ENCODE measurements at regions of chr7 and their contacts with region 1.

Region 1: GRCh38 chr7:38107486-38107893 is 70.6 kb upstream of the STARD3NL start:
- ATAC-seq: peak; percentile 69 to 88 (median 78)
- H3K4me3 ChIP-seq: no peak overlapping the region
- H3K27ac ChIP-seq: no peak overlapping the region
- H3K4me1 ChIP-seq: no peaks in the 10 kb centered on the region

Region 2: DNA sequence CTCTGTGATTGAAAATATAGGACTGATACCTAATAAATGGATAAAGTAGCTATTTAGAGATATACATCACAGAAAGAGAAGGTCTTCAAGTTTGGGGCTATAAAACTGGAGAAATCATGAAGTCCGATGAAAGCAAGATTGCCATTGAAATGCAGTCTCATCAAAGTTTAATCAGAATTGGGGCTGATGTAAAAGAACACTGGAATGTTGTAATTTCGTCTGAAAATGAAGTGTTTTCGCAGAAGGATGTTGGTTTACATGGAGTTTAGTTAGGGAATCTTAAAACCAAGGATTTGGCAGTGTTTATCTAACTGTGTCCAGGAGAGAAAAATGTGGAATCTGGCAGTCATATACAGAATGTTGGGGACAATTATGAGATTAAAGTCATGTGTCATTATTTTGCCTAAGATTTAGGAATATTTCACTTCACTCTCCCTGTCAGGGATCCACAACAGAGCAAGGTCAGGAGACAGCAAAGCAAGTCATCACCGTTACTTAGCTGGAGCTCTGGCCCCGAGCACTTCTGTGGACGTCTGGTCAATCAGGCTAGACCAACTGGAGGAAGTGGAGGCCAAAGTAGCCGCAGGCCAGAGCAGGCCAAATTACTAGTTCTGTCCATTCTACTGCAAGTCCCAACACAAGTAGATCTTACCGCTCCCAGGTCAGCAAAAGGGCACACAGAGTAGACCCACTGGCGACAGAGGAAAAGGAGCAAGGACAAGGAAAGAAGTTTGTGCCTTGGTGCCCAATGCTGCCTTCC is 150.1 kb before region 1 on chr7:
- in situ Hi-C with region 1: no loop called
- ATAC-seq: no peak
- H3K4me3 ChIP-seq: no peak overlapping the region
- H3K27ac ChIP-seq: no peak overlapping the region
- H3K4me1 ChIP-seq: no peaks in the 10 kb centered on the region

Region 3: DNA sequence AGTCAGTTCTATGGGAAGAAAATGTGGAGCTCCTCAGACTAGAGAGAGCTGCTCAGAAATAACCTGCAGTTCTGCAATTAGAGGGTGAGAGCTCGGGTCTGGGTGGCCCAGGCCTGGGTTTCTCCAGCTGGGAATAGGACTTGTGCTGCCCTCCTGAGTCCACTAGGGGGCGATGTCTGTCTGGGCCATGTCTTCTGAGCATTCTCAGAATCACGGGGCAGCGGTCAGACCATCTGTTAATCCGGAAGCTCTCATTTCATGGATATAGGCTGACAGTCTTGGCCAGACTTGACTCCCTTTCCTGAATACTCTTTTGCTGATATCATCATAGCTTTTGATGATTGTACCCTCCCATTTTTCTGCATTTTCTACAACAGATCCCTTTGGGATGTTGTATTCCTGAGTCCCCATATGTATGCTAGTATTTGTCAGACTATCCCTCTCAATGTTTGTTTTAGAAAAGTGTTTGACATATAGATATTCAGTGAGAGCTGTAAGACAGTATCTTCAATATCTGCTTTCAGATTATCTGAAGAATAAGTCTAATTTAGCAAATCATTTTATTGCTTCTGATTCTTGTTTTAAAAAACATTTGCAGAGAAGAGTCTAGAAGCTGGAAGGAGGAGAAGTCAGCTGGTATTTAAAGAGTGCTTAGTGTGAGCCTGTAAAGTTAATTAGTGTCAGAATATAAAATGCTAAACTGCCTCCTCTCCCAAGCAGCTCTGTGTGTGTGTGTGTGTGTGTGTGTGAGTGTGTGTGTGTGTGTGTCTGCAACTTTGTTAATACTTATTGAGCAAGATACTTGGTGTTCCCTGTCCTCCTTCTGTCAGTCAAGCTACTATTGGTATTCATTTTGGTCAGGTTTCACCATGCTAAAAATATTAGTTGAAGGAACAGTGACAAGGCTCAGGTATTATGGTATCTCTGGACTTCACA is 108.5 kb after region 1 on chr7:
- in situ Hi-C with region 1: loop called in 3 of 9 experiments (anchors 10 to 25 kb)
- ATAC-seq: peak; percentile 91 to 98 (median 94)
- H3K4me3 ChIP-seq: no peak overlapping the region
- H3K27ac ChIP-seq: no peak overlapping the region
- H3K4me1 ChIP-seq: peaks cover 0 to 3% of the 10 kb centered on the region in 2 donors

Region 4: DNA sequence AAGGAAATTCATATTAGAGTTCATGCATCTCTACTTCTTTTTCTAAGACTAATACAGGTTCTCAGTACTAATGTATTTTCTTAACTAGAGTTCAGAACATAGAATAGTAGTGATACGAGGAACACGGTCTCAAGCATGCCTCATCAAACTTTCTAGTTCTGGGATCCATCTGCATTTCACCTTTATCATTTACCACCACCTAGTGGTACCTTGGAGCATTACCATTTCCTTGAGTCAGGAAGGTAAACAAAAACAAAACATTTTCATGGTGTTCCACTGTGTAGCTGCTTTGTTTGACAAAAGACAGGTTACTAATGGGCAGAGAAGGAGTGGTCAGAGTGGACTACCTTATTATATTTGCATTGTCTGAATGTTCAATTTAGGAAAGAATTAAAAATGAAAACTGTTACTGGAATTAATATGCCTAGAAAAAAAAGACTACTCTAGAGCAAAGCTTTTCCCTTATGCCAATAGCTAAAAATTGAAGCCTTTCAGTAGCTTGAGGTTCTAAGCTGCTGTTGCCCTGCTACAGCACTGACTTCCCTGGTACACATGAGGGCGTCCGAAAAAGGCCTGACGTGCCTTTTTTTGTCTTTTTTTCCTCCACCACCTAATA is 115.1 kb after region 1 on chr7:
- in situ Hi-C with region 1: loop called in 3 of 9 experiments (anchors 10 to 25 kb)
- ATAC-seq: peak in 3 of 8 experiments; percentile 40 to 52 (median 43)
- H3K4me3 ChIP-seq: no peak overlapping the region
- H3K27ac ChIP-seq: no peak overlapping the region
- H3K4me1 ChIP-seq: peaks cover 0 to under 1% of the 10 kb centered on the region in 2 donors

Region 5: GRCh38 chr7:38335492-38336147 is 228.1 kb after region 1 on chr7:
- in situ Hi-C with region 1: loop called in 2 of 9 experiments (anchors 25 kb)
- ATAC-seq: peak; percentile 93 to 98 (median 96)
- H3K4me3 ChIP-seq: no peak overlapping the region
- H3K27ac ChIP-seq: no peak overlapping the region
- H3K4me1 ChIP-seq: peaks cover 0 to 3% of the 10 kb centered on the region in 2 donors

Region 6: DNA sequence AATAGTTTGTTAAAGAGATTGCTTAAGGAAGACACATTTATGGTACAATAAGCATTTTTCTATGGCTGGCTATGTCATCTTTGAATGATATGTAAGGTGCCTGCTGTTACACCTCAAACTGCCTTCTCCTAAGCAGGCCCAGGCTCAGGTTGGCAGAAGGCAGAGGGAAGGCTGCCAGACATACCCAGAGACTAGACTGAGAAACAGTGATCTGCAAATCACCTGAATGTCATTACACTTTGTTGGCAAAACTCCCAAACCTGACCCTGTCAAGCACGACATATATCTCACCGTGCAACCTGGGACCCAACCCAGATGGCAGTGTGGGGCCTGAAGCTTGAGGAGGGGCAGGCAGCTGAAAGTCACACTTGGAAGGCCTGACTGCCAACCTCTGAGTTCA is 302.6 kb after region 1 on chr7:
- in situ Hi-C with region 1: no loop called
- ATAC-seq: no peak
- H3K4me3 ChIP-seq: no peak overlapping the region
- H3K27ac ChIP-seq: no peak overlapping the region
- H3K4me1 ChIP-seq: no peaks in the 10 kb centered on the region

Region 7: DNA sequence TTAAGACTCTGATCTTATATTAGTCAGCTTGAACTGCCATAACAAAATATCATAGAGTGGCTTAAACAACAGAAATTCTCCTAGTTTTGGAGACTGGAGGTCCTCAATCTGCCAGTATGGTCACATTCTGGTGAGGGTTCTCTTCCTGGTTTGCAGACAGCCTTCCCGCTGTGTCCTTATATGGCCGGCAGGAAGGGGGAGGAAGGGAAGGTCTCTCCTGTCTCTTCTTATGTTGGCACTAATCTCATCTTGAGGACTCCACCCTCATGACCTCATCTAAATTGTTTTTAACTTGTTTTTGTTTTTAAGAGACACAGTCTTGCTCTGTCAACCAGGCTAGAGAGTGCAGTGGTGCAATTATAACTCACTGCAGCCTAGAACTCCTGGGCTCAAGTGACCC is 748.4 kb after region 1 on chr7:
- in situ Hi-C with region 1: no loop called
- ATAC-seq: peak in 3 of 8 experiments; percentile 30 to 84 (median 58)
- H3K4me3 ChIP-seq: no peak overlapping the region
- H3K27ac ChIP-seq: no peak overlapping the region
- H3K4me1 ChIP-seq: peaks cover 0 to 2% of the 10 kb centered on the region in 2 donors

Measured in motor neuron (in vitro differentiated cells).